ENCODE measurements at regions of chr11 and their contacts with region 1.

Region 1: GRCh38 chr11:31001427-31001826 is 368.1 kb downstream of the DCDC1 start:
- DNase-seq: no peak

Region 2: DNA sequence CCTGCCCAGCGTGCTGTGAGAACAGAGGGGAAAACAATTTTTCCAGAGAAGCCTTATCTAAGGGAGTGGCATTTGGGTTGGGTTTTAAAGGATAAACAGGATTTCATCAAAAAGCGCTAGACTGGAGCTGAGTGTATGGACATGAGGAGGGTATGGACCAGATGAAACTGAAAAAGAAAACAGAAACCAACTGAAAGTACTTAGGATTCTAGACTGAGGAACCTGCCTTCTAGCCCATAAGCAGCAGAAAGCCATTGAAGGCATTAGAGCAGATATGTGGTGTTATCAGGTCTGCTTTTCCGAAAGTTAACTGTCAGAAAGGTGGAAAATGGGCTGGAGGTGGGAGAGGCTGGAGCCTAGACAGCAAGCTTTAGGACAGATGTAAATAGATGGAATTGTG is 75.3 kb before region 1 on chr11:
- intact Hi-C with region 1: no loop called
- DNase-seq: no peak

Region 3: DNA sequence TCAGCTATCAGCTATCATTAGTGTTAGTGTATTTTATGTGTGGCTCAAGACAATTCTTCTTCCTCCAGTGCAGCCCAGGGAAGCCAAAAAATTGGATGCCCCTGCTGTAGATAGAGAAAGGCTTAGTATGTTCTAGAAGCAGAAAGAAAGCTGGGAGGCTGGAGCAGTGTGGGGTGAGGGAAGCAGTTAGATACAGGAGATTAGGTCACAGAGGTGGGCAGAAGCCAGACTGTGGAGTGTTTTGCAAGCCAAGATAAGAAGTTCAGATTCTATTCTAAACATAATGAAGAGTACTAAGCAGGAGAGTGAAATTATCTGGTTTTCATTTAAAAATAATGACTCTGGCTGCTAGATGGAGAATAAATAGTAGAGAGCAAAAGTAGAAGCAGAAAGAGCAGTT is 13.6 kb before region 1 on chr11:
- intact Hi-C with region 1: loop called in 1 of 2 experiments (anchors 1 kb)
- DNase-seq: no peak